Colonic mucosa (tissue), 4 donors: ENCODE measurements at regions of chr16 and their contacts with region 1.

Region 1: DNA sequence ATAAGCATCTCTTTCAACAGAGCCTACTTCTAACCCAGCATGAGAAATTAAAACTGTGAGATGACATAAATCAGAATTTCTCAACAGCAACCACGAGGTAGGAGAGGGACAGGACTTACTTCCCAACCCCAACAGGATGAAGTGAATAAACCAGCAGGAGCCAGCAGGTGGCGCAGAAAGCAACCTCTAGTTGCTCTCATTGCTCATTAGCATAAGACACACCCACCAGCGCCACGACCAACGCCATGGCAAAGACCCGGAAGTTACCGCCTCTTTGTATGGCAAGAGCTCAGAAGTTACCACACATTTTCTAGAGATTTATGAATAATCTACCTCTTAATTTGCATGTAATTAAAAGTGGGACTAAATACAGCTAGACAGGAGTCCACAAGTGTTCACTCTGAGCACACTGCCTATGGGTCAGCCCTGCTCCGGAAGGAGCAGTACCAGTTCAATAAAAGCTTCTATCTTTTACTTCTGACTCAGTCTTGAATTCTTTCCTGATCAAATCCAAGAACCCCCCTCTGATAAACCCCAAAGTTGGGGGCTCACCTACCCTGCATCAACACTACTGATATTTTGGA is 189.6 kb upstream of the CDH8 start:
- DNase-seq: peak; percentile 66
- H3K4me3 ChIP-seq: no peak overlapping the region
- H3K27ac ChIP-seq: no peak overlapping the region
- H3K4me1 ChIP-seq: no peaks in the 10 kb centered on the region
- H3K27me3 ChIP-seq: no peaks in the 10 kb centered on the region
- CTCF ChIP-seq: no peak

Region 2: DNA sequence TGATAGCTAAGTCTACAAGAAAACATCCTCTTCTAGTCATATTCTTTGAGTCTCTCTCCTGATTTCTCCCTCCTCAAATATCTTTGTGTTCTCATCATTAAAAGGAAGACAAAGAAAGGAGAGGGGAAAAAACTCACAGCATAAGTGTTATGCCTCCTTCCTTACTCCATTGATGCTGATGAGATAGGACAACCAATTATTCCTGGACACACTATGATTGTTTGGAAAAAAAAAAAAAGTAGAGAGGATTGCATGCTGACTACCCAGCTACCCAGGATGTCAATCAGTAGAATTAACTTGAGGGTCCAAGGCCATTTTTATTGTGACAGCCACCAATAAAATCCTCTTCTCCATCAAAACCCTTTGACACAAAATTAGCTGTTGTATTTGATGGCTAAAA is 109.6 kb after region 1 on chr16:
- intact Hi-C with region 1: no loop called
- DNase-seq: no peak
- H3K4me3 ChIP-seq: no peak overlapping the region
- H3K27ac ChIP-seq: no peak overlapping the region
- H3K4me1 ChIP-seq: no peaks in the 10 kb centered on the region
- H3K27me3 ChIP-seq: no peaks in the 10 kb centered on the region
- CTCF ChIP-seq: no peak

Region 3: GRCh38 chr16:63289852-63290460 is 1064.2 kb after region 1 on chr16:
- intact Hi-C with region 1: loop called (anchors 10 kb)
- DNase-seq: peak; percentile 38
- H3K4me3 ChIP-seq: no peak overlapping the region
- H3K27ac ChIP-seq: no peak overlapping the region
- H3K4me1 ChIP-seq: no peaks in the 10 kb centered on the region
- H3K27me3 ChIP-seq: no peaks in the 10 kb centered on the region
- CTCF ChIP-seq: peak; percentile 64